Transverse colon (tissue), 4 donors: ENCODE measurements at regions of chr12 and their contacts with region 1.

Region 1: DNA sequence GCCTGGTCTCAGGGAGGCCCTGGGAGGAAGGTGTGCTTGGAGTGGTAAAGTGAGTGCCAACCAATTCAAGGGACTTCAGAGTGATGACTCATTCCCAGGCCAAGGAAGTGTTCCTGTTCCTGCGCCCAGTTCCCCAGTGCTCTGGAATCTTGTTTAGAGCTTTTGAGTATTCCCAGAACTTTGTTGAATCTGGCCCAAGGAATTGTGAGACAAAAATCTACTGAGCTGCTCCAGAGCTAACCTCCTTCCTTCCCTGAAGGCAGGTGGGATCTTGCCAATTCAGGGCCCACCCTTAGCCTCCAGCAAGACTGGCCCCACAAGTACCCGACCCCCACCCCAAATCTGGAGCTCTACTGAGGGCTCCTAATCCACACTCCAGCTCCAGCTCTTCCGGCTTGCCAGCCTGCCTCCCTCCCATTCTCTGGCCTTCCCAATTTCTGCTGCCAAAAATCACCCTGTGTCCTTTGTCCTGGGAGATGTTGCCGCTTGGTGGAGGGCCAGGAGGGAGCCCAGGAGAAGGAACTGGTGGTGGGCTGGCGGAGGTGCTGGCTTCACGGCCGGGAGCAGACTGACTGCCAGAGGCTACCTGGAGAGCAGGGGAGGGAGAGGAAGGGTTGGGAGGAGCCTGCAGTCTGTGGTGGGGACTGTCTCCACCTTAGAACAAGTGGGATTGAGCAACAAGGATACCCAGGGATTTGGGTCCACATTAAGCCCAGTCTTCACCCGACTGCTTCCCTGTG is 2.0 kb upstream of the ATN1 start:
- DNase-seq: peak; percentile 76
- H3K4me3 ChIP-seq: peak overlapping the region in 3 of 4 donors; percentile 3 to 97 (median 95)
- H3K27ac ChIP-seq: peak overlapping the region; percentile 96 to 99 (median 98)
- H3K4me1 ChIP-seq: peaks cover 20 to 56% (median 52%) of the 10 kb centered on the region in 4 donors
- H3K27me3 ChIP-seq: no peaks in the 10 kb centered on the region
- CTCF ChIP-seq: peak in 1 of 5 experiments; percentile 21
- EP300 ChIP-seq: no peak
- POLR2A ChIP-seq: no peak

Region 2: GRCh38 chr12:6965026-6965661 is 39.4 kb after region 1 on chr12:
- in situ Hi-C with region 1: no loop called
- intact Hi-C with region 1: loop called (anchors 2 kb)
- DNase-seq: peak; percentile 95
- H3K4me3 ChIP-seq: peak overlapping the region in 2 of 4 donors; percentile 54 to 62
- H3K27ac ChIP-seq: peak overlapping the region; percentile 89 to 95 (median 94)
- H3K4me1 ChIP-seq: peaks cover 34 to 71% (median 57%) of the 10 kb centered on the region in 4 donors
- H3K27me3 ChIP-seq: no peaks in the 10 kb centered on the region
- CTCF ChIP-seq: peak; percentile 81 to 98 (median 91)
- EP300 ChIP-seq: no peak
- POLR2A ChIP-seq: peak; percentile 59